Spleen (tissue), 13 donors: ENCODE measurements at regions of chr6 and their contacts with region 1.

Region 1: DNA sequence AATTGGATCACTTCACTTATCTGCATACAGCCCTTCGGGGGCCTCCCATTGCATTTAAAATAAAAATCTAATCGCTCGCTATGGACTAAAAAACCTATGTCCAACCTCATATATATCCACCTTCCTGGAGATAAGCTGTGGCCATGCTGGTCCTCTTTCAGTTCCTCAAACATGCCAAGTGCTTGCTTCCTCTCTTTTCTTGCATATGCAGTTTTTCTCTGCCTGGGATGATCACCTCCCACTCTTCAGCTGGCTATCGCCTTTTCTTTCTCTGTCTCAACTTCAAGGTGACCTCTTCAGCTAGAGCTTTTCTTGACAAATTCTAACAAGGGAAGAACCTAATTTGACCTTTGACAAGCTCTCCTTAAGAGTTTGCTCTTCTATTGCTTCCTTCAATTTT is 5.6 kb upstream of the TFB1M start:
- DNase-seq: no peak
- H3K4me3 ChIP-seq: peak overlapping the region in 6 of 8 donors; percentile 8 to 63 (median 21)
- H3K27ac ChIP-seq: peak overlapping the region in 3 of 8 donors; percentile 2 to 51 (median 15)
- H3K4me1 ChIP-seq: peaks cover 0 to 24% (median 21%) of the 10 kb centered on the region in 6 donors
- H3K27me3 ChIP-seq: no peaks in the 10 kb centered on the region
- CTCF ChIP-seq: no peak
- POLR2A ChIP-seq: no peak

Region 2: DNA sequence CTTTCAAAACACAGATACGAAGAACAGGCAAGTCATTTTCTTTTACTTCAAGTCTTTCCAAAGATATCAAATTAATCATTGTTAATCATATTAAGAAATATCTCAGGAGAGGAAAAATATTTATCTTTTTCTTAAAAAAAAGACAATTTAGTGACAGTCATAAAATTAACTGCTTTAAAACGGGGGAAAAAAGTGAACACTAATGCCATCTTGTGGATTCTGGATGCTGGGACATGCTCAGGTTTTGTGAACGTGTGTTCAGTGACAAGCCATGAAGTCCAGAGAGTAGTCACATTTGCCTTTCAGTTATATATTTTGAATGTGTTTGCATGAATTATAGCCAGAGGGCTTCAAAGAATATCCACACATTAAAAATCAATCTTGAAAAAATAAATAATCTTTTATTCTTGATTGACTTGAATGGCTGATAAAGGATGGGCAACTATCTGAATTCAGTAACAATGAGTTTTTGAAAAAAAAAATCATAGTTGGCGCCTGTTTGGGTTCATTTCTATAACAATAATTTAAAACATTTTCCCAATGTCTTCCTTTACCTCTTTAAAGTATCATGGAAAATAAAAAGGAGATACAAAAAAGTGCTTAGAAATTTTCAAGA is 210.4 kb after region 1 on chr6:
- intact Hi-C with region 1: loop called (anchors 5 kb)
- DNase-seq: no peak
- H3K4me3 ChIP-seq: no peak overlapping the region
- H3K27ac ChIP-seq: peak overlapping the region in 5 of 8 donors; percentile 47 to 72 (median 61)
- H3K4me1 ChIP-seq: peaks cover 0 to 23% (median 10%) of the 10 kb centered on the region in 6 donors
- H3K27me3 ChIP-seq: no peaks in the 10 kb centered on the region
- CTCF ChIP-seq: peak; percentile 24 to 74 (median 53)
- POLR2A ChIP-seq: no peak